ENCODE measurements at regions of chr11 and their contacts with region 1.

Region 1: GRCh38 chr11:84819128-84819527 is 808.0 kb downstream of the DLG2 start:
- DNase-seq: peak in 1 of 2 experiments; percentile 53
- H3K4me3 ChIP-seq: no peak overlapping the region
- H3K27ac ChIP-seq: no peak overlapping the region
- H3K4me1 ChIP-seq: peaks cover 22% of the 10 kb centered on the region; the same call in 1 of the 2 replicates
- H3K27me3 ChIP-seq: no peaks in the 10 kb centered on the region
- CTCF ChIP-seq: no peak

Region 2: GRCh38 chr11:84853841-84854465 is 34.8 kb after region 1 on chr11:
- CTCF ChIA-PET with region 1: no interaction called
- POLR2A ChIA-PET with region 1: no interaction called
- intact Hi-C with region 1: loop called (anchors 1 kb)
- DNase-seq: peak in 1 of 2 experiments; percentile 72
- H3K4me3 ChIP-seq: no peak overlapping the region
- H3K27ac ChIP-seq: no peak overlapping the region
- H3K4me1 ChIP-seq: peaks cover 23% of the 10 kb centered on the region
- H3K27me3 ChIP-seq: no peaks in the 10 kb centered on the region
- CTCF ChIP-seq: no peak

Measured in PC-9 (cell line).